Naive thymus-derived CD4-positive, alpha-beta T cell (primary cell): ENCODE measurements at regions of chr5 and their contacts with region 1.

Region 1: DNA sequence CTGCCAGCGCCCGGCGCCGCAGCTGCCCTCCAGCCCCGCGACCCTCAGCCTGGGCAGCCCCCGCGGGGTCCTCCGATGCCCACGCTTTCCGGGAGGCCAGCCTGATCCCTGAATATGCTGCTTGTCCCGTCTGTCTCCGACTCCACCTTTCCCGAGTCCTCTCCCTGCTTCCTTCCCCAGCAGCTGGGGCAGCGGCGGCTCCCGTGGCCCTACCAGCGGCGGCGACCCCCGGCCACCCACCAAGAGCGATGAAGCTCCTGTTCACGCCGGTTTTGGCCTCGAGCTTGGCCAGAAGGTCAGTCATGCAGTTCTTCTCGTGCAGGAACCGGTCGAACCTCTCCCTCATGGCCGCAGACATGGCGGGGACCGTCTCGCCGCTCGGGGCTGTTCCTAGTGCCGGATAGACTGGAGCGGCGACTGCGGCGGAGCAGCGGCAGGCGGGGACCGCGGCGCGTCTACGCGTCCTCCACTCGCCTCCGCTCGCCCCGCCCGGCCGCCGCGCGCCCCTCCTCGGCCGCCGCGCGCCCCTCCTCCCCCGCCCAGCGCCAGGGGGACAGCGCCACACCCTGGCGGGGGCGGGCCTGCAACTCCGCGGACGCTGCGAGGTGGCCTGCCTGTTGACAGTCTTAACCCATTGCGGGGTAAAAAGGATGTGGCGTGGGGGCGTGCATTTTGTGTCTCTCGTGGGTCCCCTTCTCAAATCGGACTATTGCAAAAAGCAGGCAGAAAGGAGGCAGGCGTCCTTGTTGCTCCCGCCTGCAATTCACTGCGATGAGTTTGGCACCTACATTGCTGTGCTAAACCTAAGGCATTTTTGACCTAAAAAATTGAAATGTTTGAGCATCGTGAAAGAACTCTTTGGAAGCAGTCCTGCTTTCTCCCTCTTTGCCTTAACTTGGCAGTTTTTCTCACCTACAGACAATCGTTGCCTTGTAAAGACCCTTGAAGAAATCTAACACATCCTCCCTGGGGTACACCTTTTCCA is at the start of gene REEP5:
- DNase-seq: peak; percentile 68 to 89 (median 82)
- ATAC-seq: peak; percentile 91
- H3K4me3 ChIP-seq: peak within 1 kb of the TSS; percentile 76
- H3K4me3 Mint-ChIP-seq: peak within 1 kb of the TSS; percentile 77 to 99 (median 91)
- H3K27ac ChIP-seq: peak within 1 kb of the TSS; percentile 79
- H3K27ac Mint-ChIP-seq: peak within 1 kb of the TSS; percentile 88 to 97 (median 92)
- H3K4me1 ChIP-seq: peaks cover 49 to 52% of the 10 kb centered on the region in 2 donors
- H3K4me1 Mint-ChIP-seq: peaks cover 47 to 74% (median 61%) of the 10 kb centered on the region in 7 donors
- H3K27me3 ChIP-seq: no peaks in the 10 kb centered on the region
- H3K27me3 Mint-ChIP-seq: no peaks in the 10 kb centered on the region
- total RNA-seq, gene REEP5: 16.4 to 83.9 (median 30.0) TPM

Region 2: GRCh38 chr5:111757355-111758283 is 1164.5 kb before region 1 on chr5:
- CTCF ChIA-PET with region 1: no interaction called
- POLR2A ChIA-PET with region 1: no interaction called
- intact Hi-C with region 1: loop called in 1 of 2 experiments (anchors 10 kb)
- DNase-seq: peak; percentile 65 to 89 (median 86)
- ATAC-seq: peak; percentile 87
- H3K4me3 ChIP-seq: peak overlapping the region; percentile 64
- H3K4me3 Mint-ChIP-seq: peak overlapping the region; percentile 83 to 94 (median 90)
- H3K27ac ChIP-seq: peak overlapping the region; percentile 75
- H3K27ac Mint-ChIP-seq: peak overlapping the region; percentile 57 to 92 (median 83)
- H3K4me1 ChIP-seq: peaks cover 0 to 4% of the 10 kb centered on the region in 2 donors
- H3K4me1 Mint-ChIP-seq: peaks cover 4 to 29% (median 18%) of the 10 kb centered on the region in 7 donors
- H3K27me3 ChIP-seq: no peaks in the 10 kb centered on the region
- H3K27me3 Mint-ChIP-seq: peaks cover 0 to 6% (median 0%) of the 10 kb centered on the region in 5 donors

Region 3: GRCh38 chr5:112707187-112708102 is 214.7 kb before region 1 on chr5:
- CTCF ChIA-PET with region 1: no interaction called
- POLR2A ChIA-PET with region 1: no interaction called
- intact Hi-C with region 1: loop called (anchors 1 to 2 kb)
- DNase-seq: peak; percentile 83 to 98 (median 97)
- ATAC-seq: peak; percentile 96
- H3K4me3 ChIP-seq: peak overlapping the region; percentile 92
- H3K4me3 Mint-ChIP-seq: peak overlapping the region; percentile 79 to 98 (median 94)
- H3K27ac ChIP-seq: peak overlapping the region; percentile 82
- H3K27ac Mint-ChIP-seq: peak overlapping the region; percentile 88 to 96 (median 92)
- H3K4me1 ChIP-seq: peaks cover 29 to 47% of the 10 kb centered on the region in 2 donors
- H3K4me1 Mint-ChIP-seq: peaks cover 50 to 62% (median 57%) of the 10 kb centered on the region in 7 donors
- H3K27me3 ChIP-seq: no peaks in the 10 kb centered on the region
- H3K27me3 Mint-ChIP-seq: peaks cover 0 to 8% (median 0%) of the 10 kb centered on the region in 5 donors

Region 4: GRCh38 chr5:112848116-112848811 is 73.9 kb before region 1 on chr5:
- CTCF ChIA-PET with region 1: interaction called, 3 read pairs
- POLR2A ChIA-PET with region 1: interaction called, 4 read pairs
- intact Hi-C with region 1: loop called (anchors 1 kb)
- DNase-seq: peak in 7 of 9 donors; percentile 8 to 51 (median 40)
- ATAC-seq: peak; percentile 97
- H3K4me3 ChIP-seq: no peak overlapping the region
- H3K4me3 Mint-ChIP-seq: peak overlapping the region in 2 of 10 donors; percentile 16 to 41
- H3K27ac ChIP-seq: no peak overlapping the region
- H3K27ac Mint-ChIP-seq: peak overlapping the region in 3 of 9 donors; percentile 53 to 58 (median 53)
- H3K4me1 ChIP-seq: no peaks in the 10 kb centered on the region
- H3K4me1 Mint-ChIP-seq: peaks cover 4 to 8% (median 6%) of the 10 kb centered on the region in 7 donors
- H3K27me3 ChIP-seq: no peaks in the 10 kb centered on the region
- H3K27me3 Mint-ChIP-seq: peaks cover 0 to 20% (median 5%) of the 10 kb centered on the region in 5 donors

Region 5: GRCh38 chr5:112869948-112870347 is 52.2 kb before region 1 on chr5:
- CTCF ChIA-PET with region 1: no interaction called
- POLR2A ChIA-PET with region 1: no interaction called
- intact Hi-C with region 1: no loop called
- DNase-seq: no peak
- ATAC-seq: no peak
- H3K4me3 ChIP-seq: no peak overlapping the region
- H3K4me3 Mint-ChIP-seq: peak overlapping the region in 1 of 10 donors; percentile 24
- H3K27ac ChIP-seq: no peak overlapping the region
- H3K27ac Mint-ChIP-seq: peak overlapping the region in 5 of 9 donors; percentile 25 to 74 (median 65)
- H3K4me1 ChIP-seq: no peaks in the 10 kb centered on the region
- H3K4me1 Mint-ChIP-seq: peaks cover 21 to 62% (median 28%) of the 10 kb centered on the region in 7 donors
- H3K27me3 ChIP-seq: no peaks in the 10 kb centered on the region
- H3K27me3 Mint-ChIP-seq: no peaks in the 10 kb centered on the region

Region 6: GRCh38 chr5:112902561-112902960 is 19.6 kb before region 1 on chr5:
- CTCF ChIA-PET with region 1: interaction called, 3 read pairs
- POLR2A ChIA-PET with region 1: interaction called, 4 read pairs
- intact Hi-C with region 1: loop called in 1 of 2 experiments (anchors 2 kb)
- DNase-seq: no peak
- ATAC-seq: no peak
- H3K4me3 ChIP-seq: no peak overlapping the region
- H3K4me3 Mint-ChIP-seq: no peak overlapping the region
- H3K27ac ChIP-seq: no peak overlapping the region
- H3K27ac Mint-ChIP-seq: no peak overlapping the region
- H3K4me1 ChIP-seq: no peaks in the 10 kb centered on the region
- H3K4me1 Mint-ChIP-seq: peaks cover 0 to 22% (median 15%) of the 10 kb centered on the region in 7 donors
- H3K27me3 ChIP-seq: no peaks in the 10 kb centered on the region
- H3K27me3 Mint-ChIP-seq: no peaks in the 10 kb centered on the region

Region 7: GRCh38 chr5:112968411-112969106 is 46.4 kb after region 1 on chr5:
- CTCF ChIA-PET with region 1: interaction called, 36 read pairs
- POLR2A ChIA-PET with region 1: interaction called, 3 read pairs
- intact Hi-C with region 1: loop called (anchors 1 kb)
- DNase-seq: no peak
- ATAC-seq: no peak
- H3K4me3 ChIP-seq: no peak overlapping the region
- H3K4me3 Mint-ChIP-seq: no peak overlapping the region
- H3K27ac ChIP-seq: no peak overlapping the region
- H3K27ac Mint-ChIP-seq: no peak overlapping the region
- H3K4me1 ChIP-seq: no peaks in the 10 kb centered on the region
- H3K4me1 Mint-ChIP-seq: peaks cover 0 to 21% (median 7%) of the 10 kb centered on the region in 7 donors
- H3K27me3 ChIP-seq: no peaks in the 10 kb centered on the region
- H3K27me3 Mint-ChIP-seq: no peaks in the 10 kb centered on the region

Region 8: DNA sequence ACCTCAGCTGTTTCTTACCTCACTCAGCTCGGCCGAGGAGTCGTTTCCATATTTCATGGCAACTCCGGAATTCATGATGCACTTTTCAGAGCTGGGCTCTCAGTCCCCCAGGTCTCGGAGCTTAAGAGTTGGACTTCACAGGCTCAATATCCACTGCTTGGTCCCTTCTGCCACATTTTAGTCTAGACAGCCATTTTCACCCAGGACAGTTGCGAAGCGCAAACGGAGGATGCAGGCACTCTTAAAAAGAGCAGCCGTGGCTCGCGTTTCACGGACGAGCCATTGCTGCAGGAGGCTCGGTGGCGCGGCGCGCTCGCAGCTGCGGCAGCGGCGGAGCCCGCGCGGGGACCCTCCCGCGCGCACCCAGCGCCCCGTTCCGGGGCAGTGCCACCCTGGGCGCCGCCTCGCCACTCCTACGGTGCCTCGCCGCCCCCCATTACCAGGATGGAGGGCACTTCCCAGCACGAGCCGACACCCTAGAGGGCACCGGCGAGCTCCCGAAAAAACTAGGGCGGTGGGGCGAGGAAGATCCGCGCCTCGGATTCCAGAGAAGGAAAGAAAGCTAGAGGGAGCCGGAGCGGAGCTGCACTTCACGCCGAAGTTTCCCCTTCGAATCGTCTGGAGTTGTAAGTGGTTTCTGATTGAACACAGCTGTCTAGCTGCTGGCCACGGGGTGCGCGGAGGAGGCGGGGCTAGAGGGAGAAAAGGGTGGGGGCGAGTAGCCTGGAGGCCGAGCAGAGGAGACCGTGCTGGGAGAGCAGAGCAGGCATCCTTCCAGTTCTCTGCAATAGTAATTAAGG is 372.4 kb after region 1 on chr5:
- CTCF ChIA-PET with region 1: no interaction called
- POLR2A ChIA-PET with region 1: no interaction called
- intact Hi-C with region 1: loop called in 1 of 2 experiments (anchors 5 kb)
- DNase-seq: peak; percentile 30 to 72 (median 62)
- ATAC-seq: peak; percentile 92
- H3K4me3 ChIP-seq: peak overlapping the region; percentile 64
- H3K4me3 Mint-ChIP-seq: peak overlapping the region; percentile 88 to 96 (median 92)
- H3K27ac ChIP-seq: peak overlapping the region; percentile 43
- H3K27ac Mint-ChIP-seq: peak overlapping the region in 6 of 9 donors; percentile 21 to 86 (median 46)
- H3K4me1 ChIP-seq: peaks cover 8 to 11% of the 10 kb centered on the region in 2 donors
- H3K4me1 Mint-ChIP-seq: peaks cover 13 to 28% (median 21%) of the 10 kb centered on the region in 7 donors
- H3K27me3 ChIP-seq: no peaks in the 10 kb centered on the region
- H3K27me3 Mint-ChIP-seq: peaks cover 30 to 82% (median 59%) of the 10 kb centered on the region in 5 donors